ENCODE measurements at regions of chr19 and their contacts with region 1.

Region 1: GRCh38 chr19:49676690-49677231 is 310 bp upstream of the PRMT1 start:
- DNase-seq: peak; percentile 99 to 100 (median 100)
- ATAC-seq: peak; percentile 87 to 92 (median 91)
- H3K4me3 ChIP-seq: peak overlapping the region; percentile 71 to 100 (median 94)
- H3K27ac ChIP-seq: peak overlapping the region; percentile 80 to 100 (median 95)
- H3K4me1 ChIP-seq: peaks cover 0 to 56% (median 41%) of the 10 kb centered on the region in 12 donors
- H3K27me3 ChIP-seq: no peaks in the 10 kb centered on the region
- CTCF ChIP-seq: no peak
- POLR2A ChIP-seq: no peak

Region 2: DNA sequence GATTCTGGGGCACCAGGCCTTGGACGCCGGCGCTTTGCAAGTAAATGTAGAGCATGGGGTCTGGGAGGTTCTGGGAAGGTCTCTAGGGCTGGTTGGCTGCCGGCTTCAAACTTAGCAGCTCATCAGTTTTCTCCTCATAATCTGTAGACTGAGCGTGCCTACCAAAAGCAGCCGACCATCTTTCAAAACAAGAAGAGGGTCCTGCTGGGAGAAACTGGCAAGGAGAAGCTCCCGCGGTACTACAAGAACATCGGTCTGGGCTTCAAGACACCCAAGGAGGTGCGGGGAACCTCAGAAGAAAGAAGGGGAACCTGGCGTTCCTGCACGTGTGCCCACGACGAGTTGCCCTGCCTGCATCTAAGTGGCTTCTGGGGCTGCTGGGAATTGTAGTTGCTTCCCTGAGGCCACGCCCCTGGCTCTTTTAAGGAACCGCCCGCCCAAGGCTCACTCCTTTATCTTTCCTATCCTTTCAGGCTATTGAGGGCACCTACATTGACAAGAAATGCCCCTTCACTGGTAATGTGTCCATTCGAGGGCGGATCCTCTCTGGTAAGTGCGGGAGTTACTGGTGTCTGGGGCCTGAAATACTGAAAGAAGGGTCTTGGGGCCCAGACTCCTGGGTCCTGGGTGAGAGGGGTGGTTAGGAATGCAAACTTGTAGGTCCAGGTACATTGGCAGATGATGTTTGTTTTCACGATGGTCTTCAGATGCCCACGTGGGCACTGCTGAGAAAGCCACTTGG is 179.5 kb before region 1 on chr19:
- intact Hi-C with region 1: loop called in 2 of 10 experiments (anchors 5 kb)
- DNase-seq: peak in 4 of 5 donors; percentile 63 to 76 (median 67)
- ATAC-seq: no peak
- H3K4me3 ChIP-seq: peak overlapping the region; percentile 80 to 98 (median 90)
- H3K27ac ChIP-seq: peak overlapping the region in 11 of 12 donors; percentile 89 to 99 (median 96)
- H3K4me1 ChIP-seq: peaks cover 14 to 56% (median 41%) of the 10 kb centered on the region in 12 donors
- H3K27me3 ChIP-seq: no peaks in the 10 kb centered on the region
- CTCF ChIP-seq: no peak
- POLR2A ChIP-seq: no peak

Region 3: GRCh38 chr19:49580264-49581006 is 96.3 kb before region 1 on chr19 and contains the start of gene NOSIP:
- intact Hi-C with region 1: loop called in 4 of 10 experiments (anchors 5 to 10 kb)
- DNase-seq: peak; percentile 95 to 97 (median 96)
- ATAC-seq: peak; percentile 97 to 99 (median 98)
- H3K4me3 ChIP-seq: peak within 1 kb of the TSS; percentile 45 to 87 (median 72)
- H3K27ac ChIP-seq: peak within 1 kb of the TSS; percentile 60 to 89 (median 78)
- H3K4me1 ChIP-seq: peaks cover 0 to 32% (median 17%) of the 10 kb centered on the region in 12 donors
- H3K27me3 ChIP-seq: no peaks in the 10 kb centered on the region
- CTCF ChIP-seq: peak in 1 of 12 donors; percentile 23
- POLR2A ChIP-seq: peak; percentile 60 to 95
- total RNA-seq, gene NOSIP: 37.3 to 67.2 (median 46.3) TPM

Region 4: GRCh38 chr19:49690656-49691242 is 14.0 kb after region 1 on chr19 and contains the start of gene CPT1C:
- intact Hi-C with region 1: no loop called
- DNase-seq: peak; percentile 80 to 86 (median 83)
- ATAC-seq: peak; percentile 54 to 85 (median 75)
- H3K4me3 ChIP-seq: peak within 1 kb of the TSS; percentile 25 to 71 (median 58)
- H3K27ac ChIP-seq: peak within 1 kb of the TSS; percentile 20 to 85 (median 64)
- H3K4me1 ChIP-seq: peaks cover 0 to 50% (median 30%) of the 10 kb centered on the region in 12 donors
- H3K27me3 ChIP-seq: peaks cover 0 to 27% (median 0%) of the 10 kb centered on the region in 9 donors
- CTCF ChIP-seq: no peak
- POLR2A ChIP-seq: peak in 1 of 2 donors; percentile 43
- total RNA-seq, gene CPT1C: 1.00 to 6.0 (median 2.2) TPM

Region 5: GRCh38 chr19:49766007-49766937 is 89.5 kb after region 1 on chr19:
- intact Hi-C with region 1: loop called in 1 of 10 experiments (anchors 5 kb)
- DNase-seq: peak; percentile 99 to 100 (median 100)
- ATAC-seq: peak; percentile 90 to 96 (median 95)
- H3K4me3 ChIP-seq: peak overlapping the region in 11 of 12 donors; percentile 46 to 97 (median 84)
- H3K27ac ChIP-seq: peak overlapping the region; percentile 90 to 99 (median 94)
- H3K4me1 ChIP-seq: peaks cover 0 to 39% (median 29%) of the 10 kb centered on the region in 12 donors
- H3K27me3 ChIP-seq: no peaks in the 10 kb centered on the region
- CTCF ChIP-seq: peak in 2 of 12 donors; percentile 14 to 18
- POLR2A ChIP-seq: peak in 1 of 2 donors; percentile 92

Region 6: DNA sequence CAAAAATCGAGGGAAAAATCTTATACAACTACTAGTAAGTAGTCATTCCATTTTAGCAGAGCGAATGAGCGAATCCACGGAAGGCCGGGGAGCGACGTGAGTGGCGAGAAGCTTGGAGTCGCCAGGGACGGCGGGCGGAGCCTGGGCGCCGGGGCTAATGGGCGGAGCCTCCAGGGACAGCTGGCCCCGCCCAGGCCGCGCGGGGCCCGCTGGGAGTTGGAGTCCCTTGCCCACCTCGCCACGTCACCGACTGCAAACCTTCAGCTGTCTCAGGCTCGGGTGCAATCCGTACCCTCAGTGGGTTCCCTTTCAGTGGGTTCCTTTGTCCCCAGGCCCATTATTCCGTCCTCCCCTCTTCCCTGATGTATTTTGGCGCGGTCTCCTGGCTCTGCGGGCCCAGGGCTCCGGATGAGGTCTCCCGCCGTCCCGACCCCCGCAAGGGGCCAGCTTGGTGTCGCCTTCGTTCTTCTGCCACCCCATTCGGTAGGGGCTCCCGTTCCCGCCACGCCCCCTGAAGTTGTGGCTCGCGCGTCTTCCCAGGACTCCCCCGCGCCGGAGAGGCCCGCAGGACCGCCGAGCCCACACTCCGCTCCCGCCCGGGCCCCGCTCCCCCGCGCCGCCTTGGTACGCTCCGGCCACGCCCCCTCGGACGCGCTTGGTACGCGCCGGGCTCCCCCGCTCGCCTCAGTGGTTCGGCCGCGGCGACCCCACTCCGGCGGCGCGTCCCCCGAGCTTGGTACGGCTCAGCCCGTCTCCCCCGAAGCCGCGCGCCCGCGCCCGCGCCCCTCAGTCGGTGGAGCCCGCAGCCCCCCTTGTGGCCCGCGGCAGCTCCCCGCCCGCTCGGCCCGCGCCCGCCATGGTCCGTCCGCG is 173.9 kb after region 1 on chr19 and contains the start of gene PTOV1:
- intact Hi-C with region 1: loop called in 1 of 10 experiments (anchors 1 kb)
- DNase-seq: peak; percentile 92 to 96 (median 93)
- ATAC-seq: peak; percentile 94 to 97 (median 94)
- H3K4me3 ChIP-seq: peak within 1 kb of the TSS; percentile 60 to 99 (median 76)
- H3K27ac ChIP-seq: peak within 1 kb of the TSS; percentile 93 to 100 (median 99)
- H3K4me1 ChIP-seq: peaks cover 3 to 42% (median 25%) of the 10 kb centered on the region in 12 donors
- H3K27me3 ChIP-seq: no peaks in the 10 kb centered on the region
- CTCF ChIP-seq: no peak
- POLR2A ChIP-seq: peak; percentile 29 to 86
- total RNA-seq, gene PTOV1: 70.9 to 109 (median 91.5) TPM